ENCODE measurements at regions of chr1 and their contacts with region 1.

Region 1: DNA sequence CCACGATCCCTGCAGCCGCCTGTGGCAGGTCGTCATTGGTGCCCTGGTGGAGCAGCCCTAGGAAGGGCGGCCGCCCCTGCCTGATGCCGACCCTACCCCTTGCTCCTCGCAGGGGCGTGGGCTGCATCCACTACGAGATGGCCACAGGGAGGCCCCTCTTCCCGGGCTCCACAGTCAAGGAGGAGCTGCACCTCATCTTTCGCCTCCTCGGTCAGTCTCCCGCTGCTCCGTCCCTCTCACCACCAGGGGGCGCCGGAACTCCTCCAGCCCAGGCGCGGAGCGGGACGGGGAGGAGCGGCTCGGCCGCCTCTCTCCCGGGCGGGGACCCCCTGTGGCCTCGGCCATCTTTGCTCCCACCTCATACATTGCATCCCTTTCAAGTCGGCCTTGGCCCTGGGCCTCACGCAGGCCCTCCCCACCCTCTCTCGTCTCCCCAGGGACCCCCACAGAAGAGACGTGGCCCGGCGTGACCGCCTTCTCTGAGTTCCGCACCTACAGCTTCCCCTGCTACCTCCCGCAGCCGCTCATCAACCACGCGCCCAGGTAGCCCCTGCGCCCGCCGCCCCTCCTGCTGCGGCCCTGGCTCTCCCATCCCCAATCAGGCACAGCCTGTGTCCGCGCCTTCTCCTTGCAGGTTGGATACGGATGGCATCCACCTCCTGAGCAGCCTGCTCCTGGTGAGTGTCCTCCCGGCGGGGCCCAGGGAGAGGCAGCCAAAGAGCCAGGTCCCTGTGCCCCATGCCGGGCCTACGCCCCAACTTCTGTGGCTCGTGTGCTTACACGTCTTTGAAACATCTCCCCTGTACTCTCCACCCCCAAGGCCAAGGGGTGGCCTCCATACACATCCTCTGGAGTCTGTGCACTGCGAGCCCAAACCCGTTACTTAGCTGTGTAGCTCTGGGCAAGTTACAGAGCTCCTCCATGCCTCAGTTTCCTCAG is 24.7 kb downstream of the CDK18 start:
- DNase-seq: no peak
- ATAC-seq: peak; percentile 93
- H3K4me3 ChIP-seq: no peak overlapping the region
- H3K27ac ChIP-seq: no peak overlapping the region
- H3K4me1 ChIP-seq: no peaks in the 10 kb centered on the region
- H3K27me3 ChIP-seq: peaks cover 2 to 3% of the 10 kb centered on the region in 2 experiments; a peak in 3 of 4 replicates
- CTCF ChIP-seq: peak; percentile 78 to 96 (median 92)
- EP300 ChIP-seq: no peak
- POLR2A ChIP-seq: no peak
- RAD21 ChIP-seq: peak; percentile 78

Region 2: GRCh38 chr1:205582471-205583291 is 53.5 kb after region 1 on chr1:
- CTCF ChIA-PET with region 1: interaction called, 50 read pairs
- POLR2A ChIA-PET with region 1: no interaction called
- RAD21 ChIA-PET with region 1: interaction called, 6 read pairs
- SMC1A ChIA-PET with region 1: interaction called, 6 read pairs
- in situ Hi-C with region 1: no loop called
- intact Hi-C with region 1: no loop called
- DNase-seq: no peak
- ATAC-seq: peak; percentile 74
- H3K4me3 ChIP-seq: no peak overlapping the region
- H3K27ac ChIP-seq: no peak overlapping the region
- H3K4me1 ChIP-seq: peaks cover 10% of the 10 kb centered on the region
- H3K27me3 ChIP-seq: peaks cover 0 to 5% of the 10 kb centered on the region in 2 experiments; a peak in 2 of 4 replicates
- CTCF ChIP-seq: no peak
- EP300 ChIP-seq: no peak
- POLR2A ChIP-seq: no peak
- RAD21 ChIP-seq: no peak

Region 3: GRCh38 chr1:205645519-205645918 is 116.4 kb after region 1 on chr1:
- CTCF ChIA-PET with region 1: interaction called, 6 read pairs
- POLR2A ChIA-PET with region 1: no interaction called
- RAD21 ChIA-PET with region 1: no interaction called
- SMC1A ChIA-PET with region 1: no interaction called
- in situ Hi-C with region 1: loop called (anchors 5 kb)
- intact Hi-C with region 1: no loop called
- DNase-seq: no peak
- ATAC-seq: no peak
- H3K4me3 ChIP-seq: no peak overlapping the region
- H3K27ac ChIP-seq: no peak overlapping the region
- H3K4me1 ChIP-seq: no peaks in the 10 kb centered on the region
- H3K27me3 ChIP-seq: no peaks in the 10 kb centered on the region
- CTCF ChIP-seq: no peak
- EP300 ChIP-seq: no peak
- POLR2A ChIP-seq: no peak
- RAD21 ChIP-seq: no peak

Measured in GM12878 (cell line).